ENCODE measurements at regions of chr7 and their contacts with region 1.

Region 1: GRCh38 chr7:31413766-31414165 is 73.2 kb upstream of the NEUROD6 start:
- DNase-seq: no peak
- H3K4me3 ChIP-seq: no peak overlapping the region
- H3K27ac ChIP-seq: no peak overlapping the region
- H3K4me1 ChIP-seq: no peaks in the 10 kb centered on the region
- H3K27me3 ChIP-seq: no peaks in the 10 kb centered on the region
- CTCF ChIP-seq: no peak
- POLR2A ChIP-seq: no peak

Region 2: GRCh38 chr7:31340603-31341002 is 73.2 kb before region 1 on chr7 and contains the start of gene NEUROD6:
- intact Hi-C with region 1: loop called (anchors 2 kb)
- DNase-seq: no peak
- H3K4me3 ChIP-seq: no peak within 1 kb of the TSS
- H3K27ac ChIP-seq: no peak within 1 kb of the TSS
- H3K4me1 ChIP-seq: peaks cover 7% of the 10 kb centered on the region
- H3K27me3 ChIP-seq: no peaks in the 10 kb centered on the region
- CTCF ChIP-seq: no peak
- POLR2A ChIP-seq: no peak
- total RNA-seq, gene NEUROD6: not detected

Measured in vagina (tissue), 2 donors.